ENCODE measurements at regions of chr9 and their contacts with region 1.

Region 1: GRCh38 chr9:121545875-121546423 is 46.3 kb upstream of the GGTA1 start:
- DNase-seq: peak; percentile 91
- H3K4me3 ChIP-seq: no peak overlapping the region
- H3K27ac ChIP-seq: no peak overlapping the region
- H3K4me1 ChIP-seq: no peaks in the 10 kb centered on the region
- H3K27me3 ChIP-seq: peaks cover 0 to under 1% of the 10 kb centered on the region in 2 experiments
- CTCF ChIP-seq: peak; percentile 98 to 99
- POLR2A ChIP-seq: no peak

Region 2: GRCh38 chr9:121566481-121567465 is 20.8 kb after region 1 on chr9:
- CTCF ChIA-PET with region 1: interaction called, 29 read pairs
- POLR2A ChIA-PET with region 1: no interaction called
- dilution Hi-C with region 1: no loop called
- intact Hi-C with region 1: loop called (anchors 2 kb)
- DNase-seq: peak; percentile 39
- H3K4me3 ChIP-seq: peak overlapping the region in 1 of 3 experiments; percentile 1
- H3K27ac ChIP-seq: no peak overlapping the region
- H3K4me1 ChIP-seq: peaks cover 32% of the 10 kb centered on the region
- H3K27me3 ChIP-seq: no peaks in the 10 kb centered on the region
- CTCF ChIP-seq: no peak
- POLR2A ChIP-seq: no peak

Region 3: DNA sequence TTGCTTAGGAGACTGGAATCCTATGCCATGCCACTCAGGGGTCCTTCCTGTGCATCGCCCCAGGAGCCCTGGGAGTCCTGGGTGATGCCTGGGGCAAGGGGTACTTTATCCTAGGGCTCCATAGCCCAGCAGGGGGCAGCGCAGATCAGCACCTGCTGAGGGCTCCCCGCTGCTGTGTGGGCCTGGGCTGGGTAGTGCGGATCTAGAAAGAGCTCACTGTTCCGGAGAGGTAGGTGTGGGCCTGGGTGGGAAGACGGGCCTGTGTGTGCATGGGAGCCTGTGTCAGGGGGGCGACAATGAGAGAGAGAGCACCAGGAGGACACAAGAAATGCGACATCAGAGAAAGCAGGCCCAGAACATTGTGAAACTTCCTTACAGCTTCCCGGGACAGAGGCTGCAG is 94.1 kb after region 1 on chr9:
- CTCF ChIA-PET with region 1: interaction called, 22 read pairs
- POLR2A ChIA-PET with region 1: no interaction called
- dilution Hi-C with region 1: no loop called
- intact Hi-C with region 1: loop called (anchors 1 kb)
- DNase-seq: peak; percentile 36
- H3K4me3 ChIP-seq: no peak overlapping the region
- H3K27ac ChIP-seq: no peak overlapping the region
- H3K4me1 ChIP-seq: peaks cover 17% of the 10 kb centered on the region
- H3K27me3 ChIP-seq: no peaks in the 10 kb centered on the region
- CTCF ChIP-seq: peak; percentile 72 to 80
- POLR2A ChIP-seq: no peak

Region 4: GRCh38 chr9:121698627-121699570 is 152.9 kb after region 1 on chr9:
- CTCF ChIA-PET with region 1: interaction called, 50 read pairs
- POLR2A ChIA-PET with region 1: no interaction called
- dilution Hi-C with region 1: no loop called
- intact Hi-C with region 1: loop called (anchors 1 kb)
- DNase-seq: peak; percentile 45
- H3K4me3 ChIP-seq: peak overlapping the region; percentile 59 to 62 (median 60)
- H3K27ac ChIP-seq: peak overlapping the region; percentile 84
- H3K4me1 ChIP-seq: peaks cover 13% of the 10 kb centered on the region
- H3K27me3 ChIP-seq: no peaks in the 10 kb centered on the region
- CTCF ChIP-seq: no peak
- POLR2A ChIP-seq: no peak

Region 5: GRCh38 chr9:121992571-121993212 is 446.7 kb after region 1 on chr9:
- CTCF ChIA-PET with region 1: interaction called, 17 read pairs
- POLR2A ChIA-PET with region 1: no interaction called
- dilution Hi-C with region 1: no loop called
- intact Hi-C with region 1: loop called (anchors 1 kb)
- DNase-seq: peak; percentile 74
- H3K4me3 ChIP-seq: no peak overlapping the region
- H3K27ac ChIP-seq: no peak overlapping the region
- H3K4me1 ChIP-seq: peaks cover 5% of the 10 kb centered on the region
- H3K27me3 ChIP-seq: no peaks in the 10 kb centered on the region
- CTCF ChIP-seq: peak; percentile 58 to 68
- POLR2A ChIP-seq: no peak

Region 6: GRCh38 chr9:122125158-122125508 is 579.2 kb after region 1 on chr9:
- CTCF ChIA-PET with region 1: interaction called, 20 read pairs
- POLR2A ChIA-PET with region 1: no interaction called
- dilution Hi-C with region 1: no loop called
- intact Hi-C with region 1: loop called (anchors 1 kb)
- DNase-seq: peak; percentile 77
- H3K4me3 ChIP-seq: no peak overlapping the region
- H3K27ac ChIP-seq: no peak overlapping the region
- H3K4me1 ChIP-seq: peaks cover 20% of the 10 kb centered on the region
- H3K27me3 ChIP-seq: no peaks in the 10 kb centered on the region
- CTCF ChIP-seq: peak; percentile 85 to 95
- POLR2A ChIP-seq: no peak

Measured in endothelial cell of umbilical vein (primary cell).